A549 (cell line): ENCODE measurements at regions of chr20 and their contacts with region 1.

Region 1: GRCh38 chr20:45771182-45771759 is 20.4 kb downstream of the WFDC3 start:
- DNase-seq: peak; percentile 62 to 77
- ATAC-seq: peak; percentile 77 to 88
- H3K4me3 ChIP-seq: no peak overlapping the region
- H3K27ac ChIP-seq: no peak overlapping the region; a peak in 1 of 6 replicates
- H3K4me1 ChIP-seq: peaks cover 4% of the 10 kb centered on the region; the same call in 2 of the 3 replicates
- CTCF ChIP-seq: peak; percentile 98
- EP300 ChIP-seq: no peak
- POLR2A ChIP-seq: no peak
- RAD21 ChIP-seq: peak; percentile 96 to 97

Region 2: DNA sequence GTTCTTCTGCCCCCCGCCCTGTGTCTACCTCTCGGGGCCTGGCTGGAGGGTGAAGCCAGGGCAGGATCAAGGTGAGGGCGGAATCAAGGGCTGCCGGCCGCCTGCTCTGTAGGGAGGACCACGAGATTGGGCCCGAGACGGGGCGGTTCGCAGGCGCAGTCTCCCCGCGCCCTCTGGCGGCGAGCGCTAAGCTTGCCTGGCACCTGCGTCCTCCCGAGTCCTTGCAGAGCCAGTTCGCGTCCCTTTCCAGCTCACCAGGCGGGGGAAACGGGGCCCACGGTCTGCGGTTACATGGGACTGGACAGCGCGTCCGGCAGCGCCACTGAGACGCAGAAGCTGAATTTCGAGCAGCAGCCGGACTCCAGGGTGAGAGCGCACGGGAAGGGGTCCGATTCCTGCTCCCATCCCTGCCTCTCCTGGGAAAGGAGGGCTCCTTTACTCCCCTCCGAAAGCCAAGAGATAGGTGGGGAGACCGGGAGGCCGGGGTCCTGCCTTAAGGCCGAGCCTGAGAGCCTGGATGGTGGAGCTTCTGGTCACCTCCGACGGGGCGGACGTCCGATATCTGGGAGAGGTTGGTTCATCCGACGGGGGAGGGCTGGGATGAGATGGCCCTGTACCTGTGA is 459.6 kb before region 1 on chr20:
- CTCF ChIA-PET with region 1: interaction called, 112 read pairs
- POLR2A ChIA-PET with region 1: no interaction called
- DNase-seq: peak; percentile 75 to 78
- ATAC-seq: peak; percentile 79 to 94
- H3K4me3 ChIP-seq: no peak overlapping the region; the same call in 2 of the 3 replicates
- H3K27ac ChIP-seq: peak overlapping the region in 1 of 2 experiments; percentile 41; a peak in 1 of 6 replicates
- H3K4me1 ChIP-seq: no peaks in the 10 kb centered on the region
- CTCF ChIP-seq: peak; percentile 77
- EP300 ChIP-seq: no peak
- POLR2A ChIP-seq: no peak
- RAD21 ChIP-seq: peak; percentile 60 to 68

Region 3: GRCh38 chr20:45368221-45368980 is 402.9 kb before region 1 on chr20:
- CTCF ChIA-PET with region 1: interaction called, 72 read pairs
- POLR2A ChIA-PET with region 1: interaction called, 5 read pairs
- DNase-seq: no peak
- ATAC-seq: no peak
- H3K4me3 ChIP-seq: no peak overlapping the region
- H3K27ac ChIP-seq: no peak overlapping the region
- H3K4me1 ChIP-seq: peaks cover 4% of the 10 kb centered on the region; the same call in 1 of the 3 replicates
- CTCF ChIP-seq: no peak
- EP300 ChIP-seq: no peak
- POLR2A ChIP-seq: no peak
- RAD21 ChIP-seq: no peak

Region 4: GRCh38 chr20:45456632-45457031 is 314.6 kb before region 1 on chr20:
- CTCF ChIA-PET with region 1: interaction called, 33 read pairs
- POLR2A ChIA-PET with region 1: no interaction called
- DNase-seq: peak in 1 of 2 experiments; percentile 42
- ATAC-seq: peak; percentile 60 to 78; a peak in 4 of 6 replicates
- H3K4me3 ChIP-seq: no peak overlapping the region
- H3K27ac ChIP-seq: no peak overlapping the region
- H3K4me1 ChIP-seq: no peaks in the 10 kb centered on the region
- CTCF ChIP-seq: peak; percentile 22; the same call in 2 of the 3 replicates
- EP300 ChIP-seq: no peak
- POLR2A ChIP-seq: no peak
- RAD21 ChIP-seq: peak in 1 of 2 experiments; percentile 17; a peak in 1 of 5 replicates

Region 5: DNA sequence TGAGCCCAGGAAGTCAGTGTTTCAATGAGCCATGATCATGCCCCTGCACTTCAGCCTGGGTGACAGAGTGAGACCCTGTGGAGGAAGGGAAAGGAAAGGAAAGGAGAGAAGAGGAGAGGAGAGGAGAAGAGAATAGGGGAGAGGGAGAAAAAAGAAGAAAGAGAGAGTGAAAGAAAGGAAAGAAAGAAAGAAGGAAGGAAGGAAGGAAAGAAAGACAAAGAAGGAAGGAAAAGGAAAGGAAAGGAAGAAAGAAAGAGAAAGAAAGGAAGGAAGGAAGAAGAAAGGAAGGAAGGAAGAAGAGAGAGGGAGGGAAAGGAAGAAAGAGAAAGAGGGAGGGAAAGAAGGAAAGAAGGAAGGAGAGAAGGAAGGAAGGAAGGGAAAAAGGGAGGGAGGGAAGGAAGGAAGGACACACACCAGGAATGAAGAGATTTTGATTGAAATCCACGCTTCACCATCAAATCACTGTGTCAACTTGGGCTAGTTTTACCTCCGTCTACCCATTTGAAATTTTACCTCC is 206.5 kb before region 1 on chr20:
- CTCF ChIA-PET with region 1: interaction called, 11 read pairs
- POLR2A ChIA-PET with region 1: no interaction called
- DNase-seq: no peak
- ATAC-seq: no peak
- H3K4me3 ChIP-seq: no peak overlapping the region
- H3K27ac ChIP-seq: no peak overlapping the region
- H3K4me1 ChIP-seq: no peaks in the 10 kb centered on the region
- CTCF ChIP-seq: no peak
- EP300 ChIP-seq: no peak
- POLR2A ChIP-seq: no peak
- RAD21 ChIP-seq: no peak

Region 6: GRCh38 chr20:45672765-45673164 is 98.5 kb before region 1 on chr20:
- CTCF ChIA-PET with region 1: no interaction called
- POLR2A ChIA-PET with region 1: no interaction called
- DNase-seq: no peak
- ATAC-seq: no peak
- H3K4me3 ChIP-seq: no peak overlapping the region
- H3K27ac ChIP-seq: no peak overlapping the region
- H3K4me1 ChIP-seq: no peaks in the 10 kb centered on the region
- CTCF ChIP-seq: no peak
- EP300 ChIP-seq: no peak
- POLR2A ChIP-seq: no peak
- RAD21 ChIP-seq: no peak

Region 7: DNA sequence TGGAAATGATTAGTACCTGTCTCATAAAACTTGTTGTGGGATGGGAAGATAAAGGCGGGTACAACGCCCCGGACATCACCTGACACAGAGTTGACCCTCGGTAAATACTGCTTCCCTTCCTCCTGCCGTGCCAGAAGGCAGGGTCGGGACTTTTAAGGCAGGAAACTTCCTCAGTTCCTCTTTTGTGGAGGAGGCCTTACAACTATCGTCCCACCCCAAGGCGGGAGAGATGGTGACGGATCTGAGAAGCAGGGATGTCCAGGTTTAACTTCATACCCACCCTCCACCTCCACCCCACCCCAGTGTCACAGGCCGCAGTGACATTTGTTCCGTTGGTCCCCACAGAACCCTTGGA is 21.0 kb after region 1 on chr20:
- CTCF ChIA-PET with region 1: interaction called, 33 read pairs
- POLR2A ChIA-PET with region 1: no interaction called
- DNase-seq: no peak
- ATAC-seq: no peak; a peak in 1 of 6 replicates
- H3K4me3 ChIP-seq: peak overlapping the region; percentile 92
- H3K27ac ChIP-seq: peak overlapping the region; percentile 89 to 96
- H3K4me1 ChIP-seq: 0 out of 3 replicates have a peak, but pooled peaks cover 5% of the 10 kb centered on the region
- CTCF ChIP-seq: no peak
- EP300 ChIP-seq: no peak
- POLR2A ChIP-seq: no peak
- RAD21 ChIP-seq: no peak

Region 8: DNA sequence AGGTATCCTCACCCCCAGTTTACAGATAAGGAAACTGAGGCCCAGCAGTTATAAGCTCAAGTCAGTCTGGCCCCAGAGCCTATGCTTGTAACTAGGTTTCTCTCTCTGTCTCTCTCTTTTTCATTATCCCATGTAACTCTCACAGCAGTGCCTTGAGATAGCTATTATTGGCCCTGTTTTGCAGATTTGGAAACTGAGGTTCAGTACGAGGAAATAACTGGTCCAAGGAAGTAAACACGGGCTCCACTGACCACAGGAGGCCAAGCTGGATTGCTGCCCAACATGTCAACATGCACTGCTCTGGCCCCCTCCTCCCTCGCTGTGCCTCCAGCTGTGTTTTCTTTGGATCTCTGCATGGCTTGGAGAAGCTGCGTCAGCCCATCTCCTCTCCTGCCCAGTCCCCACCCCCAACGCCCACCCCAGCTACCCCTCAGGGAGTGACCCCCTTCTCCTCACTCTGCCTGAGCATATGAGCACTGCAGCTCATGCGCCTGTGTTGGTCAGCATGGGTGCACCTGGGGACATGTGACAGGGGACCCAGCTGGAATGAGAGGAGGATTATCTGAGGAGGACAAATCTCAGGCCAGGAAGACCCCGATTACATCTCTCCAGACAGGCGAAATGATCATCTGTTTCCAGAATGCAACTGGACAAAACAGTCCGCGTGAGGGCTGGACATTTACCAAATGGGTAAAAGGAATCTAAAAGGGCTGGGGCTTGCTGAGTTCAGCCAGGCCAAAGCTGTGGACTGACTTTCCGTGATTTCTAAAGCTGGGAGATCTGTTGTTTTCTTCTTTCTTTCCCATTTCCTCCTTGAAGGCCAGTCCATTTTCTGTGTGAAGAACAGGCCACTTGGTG is 148.5 kb after region 1 on chr20:
- CTCF ChIA-PET with region 1: no interaction called
- POLR2A ChIA-PET with region 1: no interaction called
- DNase-seq: no peak
- ATAC-seq: 0 out of 6 replicates have a peak, but pooled peaks of 1 of the 2 experiments have one; percentile 33
- H3K4me3 ChIP-seq: no peak overlapping the region
- H3K27ac ChIP-seq: no peak overlapping the region
- H3K4me1 ChIP-seq: no peaks in the 10 kb centered on the region
- CTCF ChIP-seq: no peak
- EP300 ChIP-seq: no peak
- POLR2A ChIP-seq: no peak
- RAD21 ChIP-seq: no peak